Activated naive CD4-positive, alpha-beta T cell treated with anti-CD3 and anti-CD28 coated beads for 36 hours (primary cell): ENCODE measurements at regions of chr20 and their contacts with region 1.

Region 1: GRCh38 chr20:63537525-63538203 is 488 bp upstream of the PTK6 start:
- DNase-seq: peak; percentile 98
- H3K4me3 Mint-ChIP-seq: peak overlapping the region; percentile 74
- H3K27ac Mint-ChIP-seq: peak overlapping the region; percentile 84
- H3K4me1 Mint-ChIP-seq: peaks cover 11% of the 10 kb centered on the region
- H3K27me3 Mint-ChIP-seq: no peaks in the 10 kb centered on the region

Region 2: DNA sequence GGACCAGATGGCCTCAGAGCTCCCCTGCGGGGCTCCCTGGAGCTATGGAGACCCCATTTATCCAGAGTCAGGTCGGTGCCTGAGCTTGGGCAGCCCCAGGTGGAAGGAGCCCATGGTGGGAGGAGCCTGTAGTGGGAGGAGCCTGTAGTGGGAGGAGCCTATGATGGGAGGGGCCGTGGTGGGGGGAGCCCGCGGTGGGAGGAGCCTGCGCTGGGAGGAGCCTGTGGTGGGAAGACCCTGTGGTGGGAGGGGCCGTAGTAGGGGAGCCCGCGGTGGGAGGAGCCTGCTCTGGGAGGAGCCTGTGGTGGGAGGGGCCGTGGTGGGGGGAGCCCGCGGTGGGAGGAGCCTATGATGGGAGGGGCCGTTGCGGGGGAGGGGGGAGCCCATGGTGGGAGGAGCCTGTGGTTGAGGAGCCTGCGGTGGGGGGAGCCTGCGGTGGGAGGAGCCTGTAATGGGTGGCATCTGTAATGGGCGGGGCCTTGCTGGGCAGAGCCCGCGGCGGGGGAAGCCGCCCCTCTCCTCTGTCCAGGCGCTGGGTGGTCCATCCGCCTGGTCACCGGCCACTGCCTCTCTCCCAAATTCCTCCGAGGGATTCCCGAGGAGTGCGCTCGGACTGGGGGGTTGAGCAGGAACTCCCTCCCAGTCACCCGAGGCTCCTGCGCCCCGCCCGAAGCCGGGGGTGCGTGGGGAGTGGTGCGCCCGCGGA is 15.7 kb after region 1 on chr20:
- CTCF ChIA-PET with region 1: interaction called, 5 read pairs
- intact Hi-C with region 1: loop called (anchors 1 kb)
- DNase-seq: peak; percentile 93
- H3K4me3 Mint-ChIP-seq: peak overlapping the region; percentile 47
- H3K27ac Mint-ChIP-seq: no peak overlapping the region
- H3K4me1 Mint-ChIP-seq: peaks cover 13% of the 10 kb centered on the region
- H3K27me3 Mint-ChIP-seq: no peaks in the 10 kb centered on the region

Region 3: DNA sequence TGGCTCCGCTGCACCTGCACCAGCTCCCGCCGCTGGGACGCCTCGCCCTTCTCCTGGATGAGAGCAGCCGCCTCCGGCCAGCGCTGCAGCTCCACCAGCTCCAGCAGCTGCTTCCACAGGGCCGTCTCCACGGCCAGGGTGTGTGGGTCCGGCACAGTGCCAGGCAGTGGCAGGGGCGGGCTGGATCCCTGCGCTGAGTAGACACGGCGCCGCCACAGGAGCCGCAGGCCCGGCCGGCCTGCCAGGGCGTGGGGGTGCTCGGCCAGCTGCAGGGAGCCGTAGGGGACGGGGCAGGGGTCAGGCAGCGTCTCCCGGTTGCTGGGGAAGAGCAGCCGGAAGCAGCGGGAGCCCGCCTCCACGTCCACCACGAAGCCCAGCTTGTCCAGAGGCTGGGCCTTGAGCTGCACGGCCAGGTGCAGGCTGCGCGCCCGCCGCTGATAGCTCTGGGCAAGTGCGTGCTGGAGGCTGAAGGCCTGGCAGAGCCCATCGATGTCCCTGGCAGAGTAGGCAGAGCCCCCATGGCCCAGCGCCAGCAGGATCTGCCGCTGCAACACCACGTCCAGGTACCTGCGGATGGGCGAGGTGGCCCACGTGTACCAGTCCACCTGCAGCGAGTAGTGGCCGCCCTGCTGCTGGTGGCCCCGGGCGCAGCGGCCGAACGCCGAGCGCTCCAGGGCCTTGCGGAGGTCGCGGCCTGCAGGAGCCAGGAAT is 25.7 kb after region 1 on chr20:
- CTCF ChIA-PET with region 1: no interaction called
- intact Hi-C with region 1: no loop called
- DNase-seq: no peak
- H3K4me3 Mint-ChIP-seq: no peak overlapping the region
- H3K27ac Mint-ChIP-seq: no peak overlapping the region
- H3K4me1 Mint-ChIP-seq: peaks cover 13% of the 10 kb centered on the region
- H3K27me3 Mint-ChIP-seq: no peaks in the 10 kb centered on the region

Region 4: DNA sequence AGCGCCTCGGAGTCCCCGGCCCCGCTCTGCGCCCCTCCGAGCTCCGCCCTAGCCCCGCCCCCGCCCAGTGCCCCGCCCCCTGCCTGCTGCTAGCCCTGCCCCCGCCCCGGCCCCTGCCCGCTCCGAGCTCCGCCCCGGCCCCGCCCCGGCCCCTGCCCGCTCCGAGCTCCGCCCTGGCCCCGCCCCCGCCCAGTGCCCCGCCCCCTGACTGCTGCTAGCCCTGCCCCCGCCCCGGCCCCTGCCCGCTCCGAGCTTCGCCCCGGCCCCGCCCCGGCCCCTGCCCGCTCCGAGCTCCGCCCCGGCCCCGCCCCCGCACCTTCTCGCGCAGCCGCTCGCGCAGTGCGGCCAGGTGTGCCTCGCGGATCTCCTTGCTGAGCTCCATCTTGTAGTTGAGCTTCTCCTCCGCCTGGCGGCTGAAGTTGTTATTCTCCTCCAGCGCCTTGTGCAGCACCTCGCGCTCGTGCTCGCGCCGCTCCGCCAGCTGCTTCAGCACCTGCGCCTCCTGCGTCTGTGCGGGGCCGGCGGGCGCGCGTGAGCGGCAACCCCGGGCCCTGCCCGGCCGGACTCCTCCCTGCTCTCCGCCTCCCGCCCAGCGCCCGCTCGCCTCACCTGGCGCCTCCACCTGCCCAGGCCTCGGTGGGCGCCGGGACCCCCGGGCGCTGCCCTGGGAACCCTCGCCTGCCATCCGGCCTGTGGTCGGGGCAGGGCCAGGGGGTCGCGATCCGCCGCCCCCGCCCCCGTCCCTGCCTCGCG is 104.3 kb after region 1 on chr20:
- CTCF ChIA-PET with region 1: interaction called, 10 read pairs
- intact Hi-C with region 1: loop called (anchors 1 kb)
- DNase-seq: peak; percentile 95
- H3K4me3 Mint-ChIP-seq: peak overlapping the region; percentile 76
- H3K27ac Mint-ChIP-seq: no peak overlapping the region
- H3K4me1 Mint-ChIP-seq: peaks cover 33% of the 10 kb centered on the region
- H3K27me3 Mint-ChIP-seq: no peaks in the 10 kb centered on the region

Region 5: GRCh38 chr20:63782051-63782471 is 244.4 kb after region 1 on chr20:
- CTCF ChIA-PET with region 1: interaction called, 4 read pairs
- intact Hi-C with region 1: loop called (anchors 5 kb)
- DNase-seq: peak; percentile 65
- H3K4me3 Mint-ChIP-seq: no peak overlapping the region
- H3K27ac Mint-ChIP-seq: no peak overlapping the region
- H3K4me1 Mint-ChIP-seq: peaks cover 11% of the 10 kb centered on the region
- H3K27me3 Mint-ChIP-seq: no peaks in the 10 kb centered on the region

Region 6: DNA sequence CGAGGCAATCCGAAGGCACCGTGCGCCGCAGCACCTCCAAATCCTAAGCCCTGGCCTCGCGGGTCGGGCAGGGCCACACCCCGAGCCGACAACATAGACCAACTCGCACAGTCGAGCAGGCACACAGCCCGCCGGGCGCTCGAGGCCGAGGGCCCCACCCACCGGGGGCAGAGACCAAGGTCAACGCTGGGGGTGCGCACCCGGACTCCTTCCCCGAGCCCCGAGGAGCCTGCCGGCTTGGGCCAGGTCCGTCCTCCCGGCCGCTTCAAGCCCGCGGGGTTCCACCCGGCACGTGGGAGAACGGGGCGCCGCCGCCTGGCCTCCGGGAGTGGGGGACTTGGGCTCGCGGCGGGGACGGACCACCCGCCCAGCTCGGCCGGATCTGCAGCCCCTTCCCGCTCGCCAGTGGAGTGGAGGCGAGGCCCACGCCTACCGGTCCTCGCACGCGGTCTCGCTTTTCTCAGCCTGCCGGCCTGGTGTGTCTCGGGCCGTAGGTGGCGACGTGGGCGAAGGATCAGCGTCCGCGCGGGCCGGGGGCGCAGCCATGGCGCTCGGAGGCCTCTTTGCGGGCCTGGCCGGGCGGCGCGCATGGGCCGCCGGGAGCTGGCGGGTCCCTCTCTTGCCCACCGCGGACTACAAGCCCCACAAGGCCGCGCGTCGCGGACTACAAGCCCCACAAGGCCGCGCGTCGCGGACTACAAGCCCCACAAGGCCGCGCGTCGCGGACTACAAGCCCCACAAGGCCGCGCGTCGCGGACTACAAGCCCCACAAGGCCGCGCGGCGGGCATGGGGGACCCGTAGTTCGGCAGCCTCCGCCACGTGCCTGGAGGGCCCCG is 418.4 kb after region 1 on chr20 and contains the start of gene UCKL1:
- CTCF ChIA-PET with region 1: no interaction called
- intact Hi-C with region 1: loop called (anchors 1 kb)
- DNase-seq: peak; percentile 91
- H3K4me3 Mint-ChIP-seq: peak within 1 kb of the TSS; percentile 79
- H3K27ac Mint-ChIP-seq: peak within 1 kb of the TSS; percentile 85
- H3K4me1 Mint-ChIP-seq: peaks cover 39% of the 10 kb centered on the region
- H3K27me3 Mint-ChIP-seq: no peaks in the 10 kb centered on the region
- total RNA-seq, gene UCKL1: 23.3 to 23.9 TPM

Region 7: DNA sequence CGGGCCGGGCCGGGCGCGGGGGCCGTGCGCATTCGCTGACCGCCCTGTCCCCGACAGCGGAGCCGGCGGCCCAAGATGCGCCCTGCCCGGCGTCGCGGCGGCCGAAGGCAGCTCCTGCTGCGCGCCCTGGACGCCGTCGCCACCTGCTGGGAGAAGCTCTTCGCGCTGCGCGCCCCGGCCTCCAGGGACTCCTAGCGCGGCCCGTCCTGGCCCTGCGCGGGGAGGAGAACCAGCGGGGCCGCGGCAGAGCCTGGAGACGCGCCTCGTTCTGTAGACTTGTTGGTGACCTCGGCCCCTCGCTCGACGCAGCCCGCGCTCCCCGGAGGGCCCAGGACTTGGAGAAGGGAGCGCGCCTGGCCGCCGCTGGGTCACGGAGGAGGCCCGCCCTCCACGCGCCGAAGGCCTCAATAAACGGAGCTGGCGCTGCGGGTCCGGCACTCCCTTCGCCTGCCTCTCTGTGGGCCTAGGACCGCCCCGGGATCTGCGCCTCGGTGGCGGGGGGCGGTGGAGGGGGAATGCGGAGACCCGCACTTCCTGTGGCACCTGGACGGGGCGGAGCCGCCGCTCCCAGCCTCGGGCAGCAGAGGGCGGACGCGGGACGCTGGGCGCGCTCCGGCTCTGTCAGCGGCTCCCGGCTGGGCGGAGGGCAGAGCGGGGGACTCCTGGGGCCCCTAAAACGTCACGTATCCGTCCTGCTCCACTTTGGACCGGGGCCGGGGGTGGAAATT is 501.1 kb after region 1 on chr20:
- CTCF ChIA-PET with region 1: interaction called, 3 read pairs
- intact Hi-C with region 1: loop called (anchors 1 kb)
- DNase-seq: peak; percentile 84
- H3K4me3 Mint-ChIP-seq: peak overlapping the region; percentile 67
- H3K27ac Mint-ChIP-seq: no peak overlapping the region
- H3K4me1 Mint-ChIP-seq: peaks cover 53% of the 10 kb centered on the region
- H3K27me3 Mint-ChIP-seq: peaks cover 2% of the 10 kb centered on the region